Sigmoid colon (tissue), 7 donors: ENCODE measurements at regions of chr3 and their contacts with region 1.

Region 1: DNA sequence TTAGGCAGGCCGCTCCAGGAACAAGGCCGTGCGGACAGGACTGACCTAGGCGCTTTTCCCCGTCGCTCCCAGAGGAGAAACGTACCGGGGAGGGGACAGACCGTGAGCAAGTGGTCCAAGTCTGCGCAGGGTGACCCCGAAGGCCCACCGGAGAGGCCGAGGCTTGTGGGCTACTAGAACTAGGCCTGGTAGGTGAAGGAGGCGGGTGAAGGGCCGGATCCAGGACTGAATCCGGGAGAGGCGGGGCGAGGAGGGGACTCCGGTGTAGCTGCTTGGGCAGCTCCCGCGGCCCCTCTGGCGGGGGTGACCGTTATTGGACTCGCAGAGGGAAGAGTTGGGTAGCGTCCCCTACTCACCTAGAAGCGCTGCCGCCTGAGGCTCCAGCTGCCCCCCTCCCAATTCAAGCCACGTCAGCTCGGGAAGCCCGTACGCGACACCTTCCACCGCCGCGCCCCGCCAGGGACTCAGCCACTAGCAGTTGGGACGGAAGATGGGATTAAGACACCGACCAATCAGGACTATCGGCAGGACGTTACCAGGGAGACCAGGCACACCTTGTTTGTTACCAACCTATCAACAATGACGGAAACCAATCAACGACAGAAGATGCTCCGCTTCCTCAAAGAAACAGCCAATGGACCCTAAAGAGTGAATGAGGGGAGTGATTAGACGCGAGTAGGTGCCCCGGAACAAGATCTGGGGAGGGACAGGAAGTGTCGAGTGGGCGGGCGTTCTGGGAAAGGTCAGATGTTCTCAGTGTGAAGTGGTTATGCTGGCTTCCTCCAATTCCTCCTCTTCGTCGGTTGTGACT is at the start of gene GOLGB1:
- DNase-seq: peak; percentile 98
- H3K4me3 ChIP-seq: peak within 1 kb of the TSS; percentile 68 to 92 (median 74)
- H3K27ac ChIP-seq: peak within 1 kb of the TSS; percentile 85 to 91 (median 87)
- H3K4me1 ChIP-seq: peaks cover 0 to 31% (median 22%) of the 10 kb centered on the region in 4 donors
- H3K27me3 ChIP-seq: no peaks in the 10 kb centered on the region
- CTCF ChIP-seq: no peak
- EP300 ChIP-seq: no peak
- POLR2A ChIP-seq: peak; percentile 97 to 98
- total RNA-seq, gene GOLGB1: 44.8 to 70.1 (median 54.5) TPM

Region 2: DNA sequence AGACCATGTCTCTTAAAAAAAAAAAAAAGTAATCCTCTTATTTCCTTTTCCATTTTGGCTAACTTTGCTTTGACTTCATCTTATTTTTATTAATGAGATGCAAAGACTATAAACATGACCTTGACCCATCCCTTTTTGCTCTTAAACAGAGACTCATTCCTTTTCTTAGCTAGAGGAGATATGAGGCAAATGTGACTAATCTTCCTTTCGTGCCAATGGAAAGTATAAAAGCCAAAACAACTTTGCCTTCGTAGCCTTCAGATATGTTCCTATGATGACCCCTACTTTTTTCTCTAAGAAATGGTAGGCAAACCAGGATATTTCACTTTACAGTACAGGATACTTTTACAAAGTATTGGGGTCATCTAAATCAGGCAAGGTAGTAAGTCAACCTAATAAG is 37.0 kb after region 1 on chr3:
- intact Hi-C with region 1: no loop called
- DNase-seq: no peak
- H3K4me3 ChIP-seq: no peak overlapping the region
- H3K27ac ChIP-seq: no peak overlapping the region
- H3K4me1 ChIP-seq: no peaks in the 10 kb centered on the region
- H3K27me3 ChIP-seq: no peaks in the 10 kb centered on the region
- CTCF ChIP-seq: no peak
- EP300 ChIP-seq: no peak
- POLR2A ChIP-seq: no peak

Region 3: GRCh38 chr3:121817753-121818152 is 68.3 kb after region 1 on chr3:
- intact Hi-C with region 1: no loop called
- DNase-seq: no peak
- H3K4me3 ChIP-seq: no peak overlapping the region
- H3K27ac ChIP-seq: no peak overlapping the region
- H3K4me1 ChIP-seq: no peaks in the 10 kb centered on the region
- H3K27me3 ChIP-seq: no peaks in the 10 kb centered on the region
- CTCF ChIP-seq: no peak
- EP300 ChIP-seq: no peak
- POLR2A ChIP-seq: no peak

Region 4: GRCh38 chr3:121834696-121835464 is 85.4 kb after region 1 on chr3 and contains the starts of genes EAF2 and IQCB1:
- intact Hi-C with region 1: loop called (anchors 2 kb)
- DNase-seq: peak; percentile 98
- H3K4me3 ChIP-seq: peak within 1 kb of the TSS; percentile 38 to 76 (median 70)
- H3K27ac ChIP-seq: peak within 1 kb of the TSS; percentile 77 to 85 (median 83)
- H3K4me1 ChIP-seq: peaks cover 0 to 25% (median 16%) of the 10 kb centered on the region in 4 donors
- H3K27me3 ChIP-seq: no peaks in the 10 kb centered on the region
- CTCF ChIP-seq: no peak
- EP300 ChIP-seq: no peak
- POLR2A ChIP-seq: peak; percentile 30 to 71
- total RNA-seq, gene EAF2: 3.3 to 7.8 (median 6.5) TPM
- total RNA-seq, gene IQCB1: 18.9 to 21.6 (median 19.8) TPM